Caco-2 (cell line): ENCODE measurements at regions of chr12 and their contacts with region 1.

Region 1: DNA sequence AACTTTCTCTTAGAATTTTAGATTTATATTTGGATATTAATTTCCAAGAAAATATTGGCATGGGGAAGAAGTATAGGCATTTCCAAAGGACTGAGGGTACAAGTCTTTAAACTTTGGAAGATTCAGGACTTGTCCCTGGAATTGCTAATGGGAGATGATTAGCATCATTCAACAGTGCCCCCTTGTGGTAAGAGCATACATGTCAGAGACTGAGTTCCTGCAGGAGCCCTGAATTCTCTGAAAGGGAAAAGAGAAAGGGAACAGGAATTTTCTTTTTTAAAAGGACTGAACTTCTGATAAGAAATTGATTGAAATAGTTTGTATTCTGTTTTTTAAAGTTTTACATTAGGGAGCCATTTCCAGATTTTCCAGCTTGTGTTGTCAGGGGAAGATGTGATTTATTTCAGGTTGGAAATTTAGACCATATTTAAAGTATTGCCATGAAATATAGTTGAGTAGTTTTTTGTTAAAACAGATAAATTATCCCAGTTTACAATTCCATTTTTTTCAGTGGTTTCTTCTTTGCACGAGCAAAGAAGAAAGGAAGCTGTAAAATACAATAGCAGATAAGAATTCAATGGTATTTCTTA is 44.0 kb upstream of the REP15 start:
- DNase-seq: peak; percentile 69 to 88
- H3K4me3 ChIP-seq: no peak overlapping the region
- H3K4me3 Mint-ChIP-seq: no peak overlapping the region
- H3K27ac Mint-ChIP-seq: no peak overlapping the region
- H3K4me1 ChIP-seq: no peaks in the 10 kb centered on the region
- H3K4me1 Mint-ChIP-seq: peaks cover 12% of the 10 kb centered on the region
- H3K27me3 ChIP-seq: no peaks in the 10 kb centered on the region
- H3K27me3 Mint-ChIP-seq: no peaks in the 10 kb centered on the region
- CTCF ChIP-seq: peak; percentile 91 to 96

Region 2: DNA sequence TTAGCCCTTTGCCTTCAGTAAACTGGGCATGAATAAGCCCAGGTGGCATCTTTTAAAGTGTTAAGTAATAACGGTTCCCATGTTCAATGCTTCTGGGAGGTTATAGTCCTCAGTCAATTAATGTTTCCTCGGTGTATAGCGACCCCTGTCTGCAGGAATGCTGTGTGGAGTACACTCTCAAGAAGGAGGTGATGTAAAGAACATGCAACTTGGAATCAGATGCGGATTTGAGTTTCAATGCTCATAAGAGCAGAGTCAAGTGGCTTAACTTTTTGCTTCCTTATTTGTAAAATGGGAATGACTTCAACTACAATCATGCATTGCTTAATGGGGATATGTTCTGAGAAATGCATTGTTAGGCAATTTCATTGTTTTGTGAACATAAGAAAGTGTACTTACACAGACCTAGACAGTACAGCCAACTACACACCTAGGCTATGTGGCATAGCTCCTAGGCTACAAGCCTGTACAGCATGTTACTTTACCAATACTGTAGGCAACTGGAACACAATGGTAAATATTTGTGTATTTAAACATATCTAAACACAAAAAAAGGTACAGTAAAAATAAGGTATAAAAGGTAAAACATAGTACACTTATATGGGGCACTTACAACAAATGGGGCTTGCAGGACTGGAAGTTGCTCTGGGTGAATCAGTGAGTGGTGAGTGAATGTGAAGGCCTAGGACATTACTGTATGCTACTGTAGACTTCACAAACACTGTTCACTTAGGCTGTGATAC is 51.6 kb after region 1 on chr12:
- CTCF ChIA-PET with region 1: no interaction called
- POLR2A ChIA-PET with region 1: no interaction called
- intact Hi-C with region 1: loop called (anchors 1 kb)
- DNase-seq: peak; percentile 86 to 92
- H3K4me3 ChIP-seq: no peak overlapping the region
- H3K4me3 Mint-ChIP-seq: no peak overlapping the region
- H3K27ac Mint-ChIP-seq: peak overlapping the region; percentile 72
- H3K4me1 ChIP-seq: no peaks in the 10 kb centered on the region
- H3K4me1 Mint-ChIP-seq: no peaks in the 10 kb centered on the region
- H3K27me3 ChIP-seq: no peaks in the 10 kb centered on the region
- H3K27me3 Mint-ChIP-seq: no peaks in the 10 kb centered on the region
- CTCF ChIP-seq: peak; percentile 93 to 95